Testis (tissue), 5 donors: ENCODE measurements at regions of chr7 and their contacts with region 1.

Region 1: GRCh38 chr7:132580717-132581285 is 4.5 kb upstream of the PLXNA4 start:
- DNase-seq: peak; percentile 81
- H3K4me3 ChIP-seq: no peak overlapping the region
- H3K27ac ChIP-seq: no peak overlapping the region
- H3K4me1 ChIP-seq: peaks cover 12% of the 10 kb centered on the region
- H3K27me3 ChIP-seq: no peaks in the 10 kb centered on the region
- CTCF ChIP-seq: peak; percentile 57 to 84 (median 77)
- POLR2A ChIP-seq: no peak

Region 2: DNA sequence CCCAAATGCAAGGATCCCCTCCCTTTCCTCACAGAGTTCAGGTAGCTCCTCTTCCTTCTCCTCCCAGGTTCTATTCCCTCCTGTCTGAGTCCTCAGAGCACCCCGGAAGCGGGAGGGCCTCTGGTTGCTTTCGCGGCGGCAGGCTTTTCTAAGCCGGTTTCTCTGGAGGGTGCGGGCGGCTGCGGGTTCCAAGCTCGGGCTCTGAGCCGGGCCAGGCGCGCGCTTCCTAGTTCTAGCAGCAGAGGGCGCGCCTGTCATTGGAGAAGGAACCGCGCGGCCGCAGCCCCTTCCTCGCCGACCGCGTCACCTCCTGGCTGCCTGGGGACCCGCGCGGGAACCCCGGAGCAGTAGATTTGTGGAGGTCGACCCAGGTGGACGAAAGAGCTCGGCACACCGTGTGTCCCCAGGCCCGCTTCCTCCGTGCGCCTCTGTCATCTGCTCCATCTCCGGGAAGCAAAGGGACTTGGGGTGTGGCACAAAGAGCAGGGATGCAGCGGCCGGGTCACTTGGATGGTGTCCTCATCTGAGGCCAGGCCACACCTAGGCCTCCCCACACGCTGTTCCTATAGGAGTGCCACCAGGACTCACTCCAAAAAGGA is 635.4 kb before region 1 on chr7:
- intact Hi-C with region 1: loop called (anchors 10 kb)
- DNase-seq: peak; percentile 79
- H3K4me3 ChIP-seq: peak overlapping the region in 1 of 2 donors; percentile 1
- H3K27ac ChIP-seq: no peak overlapping the region
- H3K4me1 ChIP-seq: peaks cover 5% of the 10 kb centered on the region
- H3K27me3 ChIP-seq: no peaks in the 10 kb centered on the region
- CTCF ChIP-seq: peak; percentile 65 to 92 (median 69)
- POLR2A ChIP-seq: no peak

Region 3: GRCh38 chr7:132321387-132321786 is 259.4 kb before region 1 on chr7:
- intact Hi-C with region 1: loop called (anchors 5 kb)
- DNase-seq: no peak
- H3K4me3 ChIP-seq: no peak overlapping the region
- H3K27ac ChIP-seq: no peak overlapping the region
- H3K4me1 ChIP-seq: peaks cover 13% of the 10 kb centered on the region
- H3K27me3 ChIP-seq: no peaks in the 10 kb centered on the region
- CTCF ChIP-seq: no peak
- POLR2A ChIP-seq: no peak

Region 4: GRCh38 chr7:132654150-132654549 is 73.3 kb after region 1 on chr7:
- intact Hi-C with region 1: no loop called
- DNase-seq: no peak
- H3K4me3 ChIP-seq: no peak overlapping the region
- H3K27ac ChIP-seq: no peak overlapping the region
- H3K4me1 ChIP-seq: peaks cover 8% of the 10 kb centered on the region
- H3K27me3 ChIP-seq: no peaks in the 10 kb centered on the region
- CTCF ChIP-seq: peak in 2 of 3 experiments; percentile 20 to 28
- POLR2A ChIP-seq: no peak